ENCODE measurements at regions of chr17 and their contacts with region 1.

Region 1: GRCh38 chr17:4939796-4940624 is at the starts of genes RNF167 and SLC25A11:
- DNase-seq: peak; percentile 98
- H3K4me3 Mint-ChIP-seq: peak within 1 kb of the TSS; percentile 92
- H3K27ac Mint-ChIP-seq: peak within 1 kb of the TSS; percentile 98
- H3K4me1 Mint-ChIP-seq: peaks cover 60% of the 10 kb centered on the region
- H3K27me3 Mint-ChIP-seq: peaks cover 4% of the 10 kb centered on the region

Region 2: DNA sequence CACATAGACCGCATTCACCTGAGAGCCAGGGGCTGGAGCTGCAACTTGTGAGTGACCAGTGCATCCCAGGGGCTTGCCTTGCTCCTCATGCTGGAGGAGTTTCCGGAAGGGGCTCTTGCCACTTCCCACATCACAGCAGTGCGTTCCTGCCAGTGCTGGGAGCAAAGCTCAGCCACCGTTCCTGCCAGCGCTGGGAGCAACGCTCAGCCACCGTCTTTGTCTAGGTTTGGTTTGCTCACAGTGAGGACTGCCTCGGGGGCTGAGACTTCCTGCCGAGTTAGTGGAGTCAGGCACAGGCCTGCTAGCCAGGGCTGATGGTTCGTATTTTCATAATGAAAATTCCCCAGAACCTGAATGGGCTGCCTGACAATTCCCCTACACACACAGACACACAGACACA is 31.7 kb before region 1 on chr17:
- CTCF ChIA-PET with region 1: interaction called, 15 read pairs
- DNase-seq: peak; percentile 47
- H3K4me3 Mint-ChIP-seq: no peak overlapping the region
- H3K27ac Mint-ChIP-seq: no peak overlapping the region
- H3K4me1 Mint-ChIP-seq: peaks cover 12% of the 10 kb centered on the region
- H3K27me3 Mint-ChIP-seq: peaks cover 26% of the 10 kb centered on the region

Region 3: GRCh38 chr17:4920351-4921048 is 19.5 kb before region 1 on chr17:
- CTCF ChIA-PET with region 1: no interaction called
- DNase-seq: no peak
- H3K4me3 Mint-ChIP-seq: no peak overlapping the region
- H3K27ac Mint-ChIP-seq: no peak overlapping the region
- H3K4me1 Mint-ChIP-seq: no peaks in the 10 kb centered on the region
- H3K27me3 Mint-ChIP-seq: no peaks in the 10 kb centered on the region